ENCODE measurements at regions of chr13 and their contacts with region 1.

Region 1: DNA sequence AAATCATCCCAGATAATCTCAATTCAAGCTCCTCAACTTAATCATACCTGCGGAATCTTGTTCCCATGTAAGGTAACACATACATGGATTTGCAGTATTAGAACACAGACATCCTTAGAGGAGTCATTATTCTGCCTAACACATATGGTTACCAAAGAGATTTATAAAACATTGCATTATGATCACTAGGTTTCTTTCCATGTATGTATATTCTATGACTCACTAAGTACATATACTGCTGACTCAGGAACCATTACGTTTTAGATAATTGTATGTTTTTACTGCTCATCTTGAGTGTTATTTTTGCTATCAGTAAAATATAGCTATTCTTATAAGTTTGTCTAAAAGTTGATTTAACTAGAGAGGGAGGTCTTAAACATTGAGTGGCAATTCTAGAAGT is 182.9 kb downstream of the SLITRK6 start:
- DNase-seq: no peak
- ATAC-seq: no peak
- H3K4me3 ChIP-seq: no peak overlapping the region
- H3K27ac ChIP-seq: no peak overlapping the region
- H3K4me1 ChIP-seq: no peaks in the 10 kb centered on the region
- H3K27me3 ChIP-seq: no peaks in the 10 kb centered on the region
- CTCF ChIP-seq: no peak
- EP300 ChIP-seq: no peak
- POLR2A ChIP-seq: no peak
- RAD21 ChIP-seq: no peak

Region 2: GRCh38 chr13:85671336-85671735 is 55.1 kb after region 1 on chr13:
- CTCF ChIA-PET with region 1: no interaction called
- POLR2A ChIA-PET with region 1: no interaction called
- RAD21 ChIA-PET with region 1: no interaction called
- SMC1A ChIA-PET with region 1: no interaction called
- in situ Hi-C with region 1: loop called (anchors 5 kb)
- intact Hi-C with region 1: no loop called
- DNase-seq: no peak
- ATAC-seq: no peak
- H3K4me3 ChIP-seq: no peak overlapping the region
- H3K27ac ChIP-seq: no peak overlapping the region
- H3K4me1 ChIP-seq: no peaks in the 10 kb centered on the region
- H3K27me3 ChIP-seq: no peaks in the 10 kb centered on the region
- CTCF ChIP-seq: no peak
- EP300 ChIP-seq: no peak
- POLR2A ChIP-seq: no peak
- RAD21 ChIP-seq: no peak

Region 3: GRCh38 chr13:86269511-86269910 is 653.2 kb after region 1 on chr13:
- CTCF ChIA-PET with region 1: no interaction called
- POLR2A ChIA-PET with region 1: no interaction called
- RAD21 ChIA-PET with region 1: no interaction called
- SMC1A ChIA-PET with region 1: no interaction called
- in situ Hi-C with region 1: no loop called
- intact Hi-C with region 1: no loop called
- DNase-seq: no peak
- ATAC-seq: peak; percentile 64
- H3K4me3 ChIP-seq: no peak overlapping the region
- H3K27ac ChIP-seq: no peak overlapping the region
- H3K4me1 ChIP-seq: no peaks in the 10 kb centered on the region
- H3K27me3 ChIP-seq: no peaks in the 10 kb centered on the region
- CTCF ChIP-seq: no peak
- EP300 ChIP-seq: no peak
- POLR2A ChIP-seq: no peak
- RAD21 ChIP-seq: no peak